Heart left ventricle (tissue), 16 donors: ENCODE measurements at regions of chr15 and their contacts with region 1.

Region 1: DNA sequence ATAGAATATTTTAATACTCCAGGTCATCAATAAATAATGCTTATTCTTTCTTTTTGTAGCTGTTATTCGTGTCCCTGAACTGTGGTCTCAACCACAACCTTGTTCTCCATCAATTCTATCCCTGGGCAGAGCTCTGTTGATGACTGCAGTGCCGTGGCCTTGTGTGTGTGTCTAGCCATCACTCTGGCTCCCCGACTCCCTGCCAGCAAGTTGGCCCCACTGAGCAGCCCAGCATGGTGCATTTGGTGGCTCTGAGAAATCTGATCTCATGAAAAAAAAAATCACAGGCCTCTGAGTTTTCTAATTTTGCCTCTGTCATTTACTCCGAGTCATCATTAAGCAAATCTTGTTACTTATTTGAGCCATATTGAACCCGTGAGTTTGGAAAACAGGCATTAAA is 164.7 kb downstream of the GOLGA6L6 start:
- DNase-seq: peak in 1 of 5 donors; percentile 53
- ATAC-seq: no peak
- H3K4me3 ChIP-seq: no peak overlapping the region
- H3K27ac ChIP-seq: no peak overlapping the region
- H3K4me1 ChIP-seq: no peaks in the 10 kb centered on the region
- H3K27me3 ChIP-seq: peaks cover 0 to 3% (median 0%) of the 10 kb centered on the region in 9 donors
- CTCF ChIP-seq: no peak
- POLR2A ChIP-seq: no peak

Region 2: DNA sequence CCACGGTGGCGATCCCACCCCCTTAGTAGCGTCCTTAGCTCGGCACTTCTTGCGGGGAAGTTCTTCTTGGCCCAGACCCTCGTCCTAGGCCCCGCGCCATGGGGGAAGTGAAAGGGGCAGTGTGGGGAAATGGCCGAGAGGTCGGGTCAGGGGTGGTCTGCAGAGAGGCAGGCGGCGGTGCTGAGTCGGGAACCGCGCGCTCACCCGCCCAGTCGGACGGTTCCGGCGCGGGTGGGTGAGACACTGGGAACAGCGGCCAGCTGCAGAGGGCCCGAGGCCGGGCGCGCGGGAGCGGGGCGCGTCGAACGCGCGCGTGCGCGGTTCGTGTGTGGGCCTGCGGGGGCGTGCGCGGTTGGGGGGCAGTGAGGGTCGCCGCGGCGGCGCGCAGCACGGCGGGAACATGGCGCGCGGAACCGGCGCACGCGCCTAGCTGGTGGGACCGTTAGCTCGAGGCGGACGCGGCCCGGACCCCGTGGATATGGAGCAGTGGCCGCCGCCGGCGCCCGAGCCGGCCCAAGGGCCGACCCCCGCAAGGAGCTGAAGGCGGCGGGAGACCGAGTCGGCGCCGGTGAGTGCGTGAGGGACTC is 82.1 kb before region 1 on chr15:
- intact Hi-C with region 1: no loop called
- DNase-seq: peak in 1 of 5 donors; percentile 75
- ATAC-seq: no peak
- H3K4me3 ChIP-seq: no peak overlapping the region
- H3K27ac ChIP-seq: no peak overlapping the region
- H3K4me1 ChIP-seq: no peaks in the 10 kb centered on the region
- H3K27me3 ChIP-seq: peaks cover 0 to 31% (median 6%) of the 10 kb centered on the region in 9 donors
- CTCF ChIP-seq: no peak
- POLR2A ChIP-seq: no peak

Region 3: DNA sequence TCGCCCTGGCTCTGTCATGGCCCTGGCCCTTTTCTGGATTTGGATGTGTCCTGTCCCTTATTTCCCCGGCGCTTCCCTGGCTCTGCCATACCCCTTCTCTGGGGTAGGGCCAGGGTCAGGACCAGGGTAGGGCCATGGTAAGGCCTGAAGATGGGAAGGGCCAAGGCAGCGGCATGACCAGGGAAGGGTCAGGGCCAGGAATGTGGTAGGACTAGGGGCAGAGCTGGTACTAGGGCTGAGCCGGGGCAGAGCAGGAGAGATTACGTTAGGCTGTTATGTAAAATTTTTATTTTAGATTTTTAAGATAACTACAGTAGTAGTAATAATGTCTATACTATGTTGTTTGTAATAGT is 71.9 kb before region 1 on chr15:
- intact Hi-C with region 1: loop called in 2 of 10 experiments (anchors 10 kb)
- DNase-seq: peak in 1 of 5 donors; percentile 9
- ATAC-seq: no peak
- H3K4me3 ChIP-seq: no peak overlapping the region
- H3K27ac ChIP-seq: no peak overlapping the region
- H3K4me1 ChIP-seq: no peaks in the 10 kb centered on the region
- H3K27me3 ChIP-seq: peaks cover 0 to 6% (median 0%) of the 10 kb centered on the region in 9 donors
- CTCF ChIP-seq: no peak
- POLR2A ChIP-seq: no peak

Region 4: GRCh38 chr15:20310603-20311002 is 66.3 kb before region 1 on chr15:
- intact Hi-C with region 1: loop called in 2 of 10 experiments (anchors 10 kb)
- DNase-seq: no peak
- ATAC-seq: no peak
- H3K4me3 ChIP-seq: no peak overlapping the region
- H3K27ac ChIP-seq: no peak overlapping the region
- H3K4me1 ChIP-seq: no peaks in the 10 kb centered on the region
- H3K27me3 ChIP-seq: no peaks in the 10 kb centered on the region
- CTCF ChIP-seq: no peak
- POLR2A ChIP-seq: no peak

Region 5: GRCh38 chr15:20340931-20341661 is 35.8 kb before region 1 on chr15:
- intact Hi-C with region 1: no loop called
- DNase-seq: peak; percentile 74 to 97 (median 78)
- ATAC-seq: peak; percentile 22 to 55 (median 41)
- H3K4me3 ChIP-seq: no peak overlapping the region
- H3K27ac ChIP-seq: no peak overlapping the region
- H3K4me1 ChIP-seq: no peaks in the 10 kb centered on the region
- H3K27me3 ChIP-seq: peaks cover 0 to 2% (median 0%) of the 10 kb centered on the region in 9 donors
- CTCF ChIP-seq: no peak
- POLR2A ChIP-seq: peak in 1 of 2 donors; percentile 18